ENCODE measurements at regions of chr11 and their contacts with region 1.

Region 1: GRCh38 chr11:63490551-63491239 is at the start of gene PLAAT5:
- DNase-seq: peak; percentile 74
- ATAC-seq: peak; percentile 91
- total RNA-seq, gene PLAAT5: 4.8 TPM

Region 2: DNA sequence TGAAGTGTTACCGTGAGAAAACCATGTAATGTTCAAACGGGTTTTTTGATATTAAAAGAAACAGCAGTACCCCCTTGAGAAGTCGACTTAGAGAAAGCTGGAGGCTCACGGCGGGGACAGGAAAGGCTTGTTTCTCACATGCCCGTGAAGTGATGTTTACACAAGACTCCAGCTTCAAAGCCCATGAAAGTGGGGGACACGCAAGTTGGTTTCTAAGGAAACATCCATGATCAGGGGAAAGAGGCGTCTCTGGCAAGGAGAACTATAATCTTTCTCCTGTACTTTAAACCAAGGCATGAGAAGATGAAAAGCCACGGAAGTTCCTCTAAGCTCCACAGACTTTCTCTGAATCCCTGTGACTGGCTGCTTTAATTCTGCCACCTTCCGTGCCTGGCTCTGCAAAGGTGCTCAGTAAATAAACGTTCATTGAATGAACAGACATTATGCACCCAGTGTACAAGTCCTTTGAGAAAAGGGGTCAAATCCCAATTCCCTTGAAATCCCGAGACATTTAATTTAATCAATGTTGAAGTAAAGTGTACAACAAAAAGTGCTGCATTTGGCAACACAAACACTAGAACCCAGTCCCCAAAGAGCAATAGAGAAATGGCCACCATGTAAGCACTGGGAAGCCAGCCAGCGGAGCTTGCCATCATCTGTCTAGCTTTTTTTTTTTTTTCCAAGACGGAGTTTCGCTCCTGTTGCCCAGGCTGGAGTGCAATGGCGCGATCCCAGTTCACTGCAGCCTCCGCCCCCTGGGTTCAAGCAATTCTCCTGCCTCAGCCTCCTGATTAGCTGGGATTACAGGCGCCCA is 1002.8 kb before region 1 on chr11:
- intact Hi-C with region 1: no loop called
- DNase-seq: no peak
- ATAC-seq: no peak

Region 3: GRCh38 chr11:63508009-63508408 is 17.3 kb after region 1 on chr11:
- intact Hi-C with region 1: loop called (anchors 1 kb)
- DNase-seq: no peak
- ATAC-seq: peak; percentile 61

Measured in Right ventricle myocardium inferior (tissue), 1 donor.